ENCODE measurements at regions of chr18 and their contacts with region 1.

Region 1: GRCh38 chr18:9849407-9850281 is 36.1 kb upstream of the TXNDC2 start:
- DNase-seq: peak; percentile 92 to 98
- H3K4me3 ChIP-seq: peak overlapping the region; percentile 44; the same call in 1 of the 2 replicates
- H3K27ac ChIP-seq: peak overlapping the region; percentile 96
- H3K4me1 ChIP-seq: peaks cover 51% of the 10 kb centered on the region
- H3K27me3 ChIP-seq: no peaks in the 10 kb centered on the region
- CTCF ChIP-seq: no peak

Region 2: DNA sequence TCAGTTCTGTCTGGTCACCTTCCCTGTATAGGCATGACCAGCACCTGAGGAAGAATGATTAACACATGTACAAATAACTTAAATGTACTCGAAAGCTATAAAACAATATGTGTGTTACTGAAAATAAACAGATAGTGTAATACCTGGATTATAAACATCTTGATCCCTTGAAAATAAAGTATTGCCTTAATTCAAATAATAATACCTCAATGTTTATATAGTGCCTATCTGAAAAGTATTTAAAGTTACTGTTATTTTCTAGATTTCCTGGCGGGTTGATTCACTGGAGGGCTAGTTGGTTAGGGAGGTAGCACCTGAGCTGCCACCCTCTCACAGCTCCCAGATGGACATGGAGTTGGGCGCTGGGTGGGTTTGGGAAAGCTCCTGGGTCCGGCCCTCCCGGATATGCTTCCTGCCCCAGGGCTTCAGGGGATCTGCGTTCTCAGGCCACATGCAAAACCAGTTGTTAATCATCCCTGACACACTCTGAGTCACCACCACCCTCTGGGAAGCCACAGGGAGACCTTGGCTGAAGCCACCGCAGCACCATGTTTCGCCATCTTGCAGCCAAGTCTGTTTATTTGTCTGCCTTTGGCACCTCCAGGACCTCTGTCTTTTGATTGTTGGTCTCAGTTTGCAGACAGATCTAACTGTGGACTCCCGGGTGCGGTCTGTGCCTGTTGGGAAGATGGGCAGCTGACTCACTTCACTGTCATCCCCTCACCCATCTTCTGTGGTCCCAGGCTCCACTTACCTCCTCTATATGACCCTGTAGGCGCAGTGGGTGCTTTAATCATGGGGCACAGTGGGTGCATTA is 106.2 kb before region 1 on chr18:
- CTCF ChIA-PET with region 1: no interaction called
- POLR2A ChIA-PET with region 1: no interaction called
- intact Hi-C with region 1: loop called (anchors 5 kb)
- DNase-seq: peak; percentile 94 to 96
- H3K4me3 ChIP-seq: peak overlapping the region; percentile 27
- H3K27ac ChIP-seq: peak overlapping the region; percentile 96
- H3K4me1 ChIP-seq: peaks cover 59% of the 10 kb centered on the region
- H3K27me3 ChIP-seq: no peaks in the 10 kb centered on the region
- CTCF ChIP-seq: no peak

Region 3: DNA sequence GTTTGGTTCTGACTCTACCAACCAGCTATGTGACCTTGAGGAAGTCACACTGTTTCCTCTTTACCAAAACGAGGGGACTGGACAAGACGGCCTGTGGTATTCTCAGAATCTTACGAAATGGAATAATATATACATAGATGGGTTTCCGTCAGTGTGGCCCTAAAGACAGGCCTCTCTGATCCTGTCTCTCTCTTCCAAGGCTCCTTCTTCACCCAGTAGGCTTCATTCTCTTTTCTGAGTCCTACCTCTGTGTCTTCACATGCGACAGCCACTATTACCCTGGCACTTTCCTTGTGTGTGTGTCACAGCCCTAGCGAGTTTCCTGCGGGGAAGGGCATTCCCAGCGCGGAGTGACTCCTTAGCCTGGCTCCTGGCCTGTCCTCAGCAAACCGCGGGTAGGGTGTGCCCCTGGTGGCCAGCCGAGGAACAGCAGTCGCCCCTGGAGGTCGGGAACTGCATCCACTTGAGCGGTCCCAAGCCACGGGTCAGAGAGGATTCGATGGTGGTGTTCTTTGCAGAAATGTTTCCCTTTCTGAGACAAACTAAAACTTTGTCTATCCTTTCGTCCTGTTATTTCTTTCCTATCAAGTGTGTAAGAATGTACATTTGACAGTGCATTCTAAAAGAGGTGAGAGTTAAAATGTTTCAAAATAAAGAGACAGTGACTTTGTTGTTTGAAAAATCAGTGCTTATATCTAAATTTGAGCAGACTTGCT is 78.2 kb before region 1 on chr18:
- CTCF ChIA-PET with region 1: no interaction called
- POLR2A ChIA-PET with region 1: no interaction called
- intact Hi-C with region 1: loop called (anchors 1 kb)
- DNase-seq: peak in 1 of 2 experiments; percentile 81
- H3K4me3 ChIP-seq: no peak overlapping the region
- H3K27ac ChIP-seq: no peak overlapping the region
- H3K4me1 ChIP-seq: peaks cover 12% of the 10 kb centered on the region
- H3K27me3 ChIP-seq: no peaks in the 10 kb centered on the region
- CTCF ChIP-seq: peak; percentile 69

Region 4: DNA sequence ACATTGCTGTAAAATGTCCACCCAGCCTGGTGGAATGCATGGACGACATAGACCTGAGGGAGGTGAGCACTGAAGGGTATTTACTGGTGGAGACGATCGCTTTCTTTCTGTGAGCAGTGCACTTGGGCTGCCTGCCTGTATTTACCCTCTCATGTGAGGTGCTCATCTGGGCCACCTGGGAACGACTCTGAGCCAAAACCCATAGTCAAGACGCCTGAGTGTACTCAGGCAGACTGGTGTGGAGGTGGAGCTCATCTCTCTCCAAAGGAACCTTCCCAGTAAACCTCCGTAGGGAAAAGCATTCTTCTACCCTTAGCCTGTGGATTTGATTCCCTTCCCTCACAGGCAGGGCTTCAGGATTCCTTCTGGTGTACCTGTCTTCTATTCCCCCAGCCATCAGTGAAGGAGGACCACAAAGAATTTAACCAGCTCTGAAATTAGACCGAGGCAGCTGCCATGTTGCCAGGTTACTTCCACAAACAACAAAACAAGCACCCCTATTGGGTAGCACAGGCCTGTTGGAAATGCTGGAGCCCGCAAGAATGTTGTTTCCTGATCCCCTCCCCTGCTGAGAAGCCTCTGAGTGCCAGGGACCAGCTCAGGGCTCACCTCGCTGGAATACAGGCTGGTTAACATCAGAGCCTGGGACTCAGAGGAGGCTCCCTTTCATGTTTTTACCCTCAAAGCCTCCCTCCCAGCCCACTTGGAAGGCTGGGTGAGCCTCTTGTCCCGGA is 11.3 kb before region 1 on chr18:
- CTCF ChIA-PET with region 1: no interaction called
- POLR2A ChIA-PET with region 1: interaction called, 10 read pairs
- intact Hi-C with region 1: loop called (anchors 1 kb)
- DNase-seq: peak; percentile 91 to 94
- H3K4me3 ChIP-seq: no peak overlapping the region
- H3K27ac ChIP-seq: peak overlapping the region; percentile 39
- H3K4me1 ChIP-seq: peaks cover 42% of the 10 kb centered on the region
- H3K27me3 ChIP-seq: no peaks in the 10 kb centered on the region
- CTCF ChIP-seq: no peak

Region 5: GRCh38 chr18:9876867-9877654 is 27.4 kb after region 1 on chr18:
- CTCF ChIA-PET with region 1: no interaction called
- POLR2A ChIA-PET with region 1: interaction called, 10 read pairs
- intact Hi-C with region 1: no loop called
- DNase-seq: peak; percentile 57 to 96
- H3K4me3 ChIP-seq: peak overlapping the region; percentile 52
- H3K27ac ChIP-seq: peak overlapping the region; percentile 97
- H3K4me1 ChIP-seq: peaks cover 34% of the 10 kb centered on the region
- H3K27me3 ChIP-seq: no peaks in the 10 kb centered on the region
- CTCF ChIP-seq: no peak

Region 6: GRCh38 chr18:9951022-9951859 is 101.6 kb after region 1 on chr18:
- CTCF ChIA-PET with region 1: no interaction called
- POLR2A ChIA-PET with region 1: no interaction called
- intact Hi-C with region 1: loop called (anchors 5 kb)
- DNase-seq: peak; percentile 22 to 46
- H3K4me3 ChIP-seq: no peak overlapping the region
- H3K27ac ChIP-seq: 0 out of 2 replicates have a peak overlapping the region, but pooled peaks have one; percentile 20
- H3K4me1 ChIP-seq: no peaks in the 10 kb centered on the region; the same call in 1 of the 2 replicates
- H3K27me3 ChIP-seq: no peaks in the 10 kb centered on the region
- CTCF ChIP-seq: peak; percentile 73